SK-N-SH (cell line): ENCODE measurements at regions of chr4 and their contacts with region 1.

Region 1: GRCh38 chr4:76067652-76068286 is 6.7 kb upstream of the ART3 start:
- DNase-seq: peak; percentile 71
- H3K4me3 ChIP-seq: no peak overlapping the region
- H3K27ac ChIP-seq: no peak overlapping the region
- H3K4me1 ChIP-seq: no peaks in the 10 kb centered on the region
- H3K27me3 ChIP-seq: no peaks in the 10 kb centered on the region
- CTCF ChIP-seq: peak; percentile 95
- EP300 ChIP-seq: no peak
- RAD21 ChIP-seq: peak; percentile 85

Region 2: DNA sequence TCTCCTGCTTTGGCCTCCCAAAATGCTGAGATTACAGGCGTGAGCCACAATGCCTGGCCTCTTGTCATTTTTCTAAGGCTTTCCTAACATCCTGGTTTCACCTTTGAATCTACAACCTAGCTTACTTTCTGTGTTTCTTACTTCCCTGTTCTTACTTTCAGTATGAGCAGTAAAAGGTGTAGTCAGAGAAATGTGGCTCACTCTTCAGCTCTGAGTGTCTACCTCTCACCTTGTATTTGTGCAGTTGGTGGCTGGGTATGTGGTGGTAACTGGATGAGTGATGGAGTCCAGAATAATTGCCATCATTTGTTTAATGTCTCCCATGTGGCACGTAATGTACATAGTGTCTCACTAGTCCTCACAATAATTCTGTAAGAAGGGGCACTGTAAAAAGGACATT is 12.8 kb before region 1 on chr4:
- CTCF ChIA-PET with region 1: interaction called, 10 read pairs
- POLR2A ChIA-PET with region 1: no interaction called
- DNase-seq: no peak
- H3K4me3 ChIP-seq: no peak overlapping the region
- H3K27ac ChIP-seq: no peak overlapping the region
- H3K4me1 ChIP-seq: no peaks in the 10 kb centered on the region
- H3K27me3 ChIP-seq: peaks cover 8% of the 10 kb centered on the region; the same call in 1 of the 2 replicates
- CTCF ChIP-seq: no peak
- EP300 ChIP-seq: no peak
- RAD21 ChIP-seq: no peak